BJ (cell line): ENCODE measurements at regions of chr2 and their contacts with region 1.

Region 1: GRCh38 chr2:161223139-161223732 is 63.0 kb downstream of the TANK start:
- DNase-seq: no peak
- H3K4me3 ChIP-seq: no peak overlapping the region
- H3K27me3 ChIP-seq: no peaks in the 10 kb centered on the region
- CTCF ChIP-seq: peak; percentile 54

Region 2: GRCh38 chr2:161204846-161205245 is 18.4 kb before region 1 on chr2:
- CTCF ChIA-PET with region 1: no interaction called
- POLR2A ChIA-PET with region 1: no interaction called
- DNase-seq: no peak
- H3K4me3 ChIP-seq: no peak overlapping the region
- H3K27me3 ChIP-seq: no peaks in the 10 kb centered on the region
- CTCF ChIP-seq: no peak

Region 3: GRCh38 chr2:161237392-161238264 is 14.4 kb after region 1 on chr2:
- CTCF ChIA-PET with region 1: interaction called, 14 read pairs
- POLR2A ChIA-PET with region 1: no interaction called
- DNase-seq: peak; percentile 8
- H3K4me3 ChIP-seq: peak overlapping the region; percentile 64
- H3K27me3 ChIP-seq: no peaks in the 10 kb centered on the region
- CTCF ChIP-seq: no peak